Dorsolateral prefrontal cortex (tissue), 120 donors: ENCODE measurements at regions of chr15 and their contacts with region 1.

Region 1: GRCh38 chr15:74036271-74037170 is 42.0 kb downstream of the PML start:
- DNase-seq: peak in 7 of 10 donors; percentile 41 to 73 (median 65)
- H3K4me3 ChIP-seq: no peak overlapping the region
- H3K27ac ChIP-seq: peak overlapping the region in 1 of 59 donors; percentile 27
- H3K27me3 ChIP-seq: no peaks in the 10 kb centered on the region
- CTCF ChIP-seq: peak in 53 of 56 donors; percentile 31 to 68 (median 51)

Region 2: DNA sequence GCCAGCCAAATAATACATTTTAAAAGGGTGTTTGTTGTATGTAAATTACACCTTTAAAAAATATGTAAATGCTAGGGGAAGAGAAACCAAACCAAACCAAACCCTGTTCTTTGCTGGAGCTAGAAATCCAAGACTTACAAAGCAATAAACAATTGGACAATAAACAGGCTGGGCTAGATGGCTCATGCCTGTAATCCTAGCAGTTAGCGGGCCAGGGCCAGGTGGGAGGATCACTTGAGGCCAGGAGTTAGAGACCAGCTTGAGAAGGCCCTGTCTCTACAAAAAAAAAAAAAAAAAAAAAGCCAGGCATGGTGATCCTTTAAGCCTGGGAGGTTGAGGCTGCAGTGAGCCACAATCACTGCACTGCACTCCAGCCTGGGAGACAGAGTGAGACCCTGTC is 56.9 kb before region 1 on chr15:
- intact Hi-C with region 1: loop called (anchors 5 kb)
- DNase-seq: no peak
- H3K4me3 ChIP-seq: no peak overlapping the region
- H3K27ac ChIP-seq: no peak overlapping the region
- H3K27me3 ChIP-seq: peaks cover 0 to 12% (median 0%) of the 10 kb centered on the region in 45 donors
- CTCF ChIP-seq: no peak

Region 3: GRCh38 chr15:74108111-74108510 is 71.6 kb after region 1 on chr15:
- intact Hi-C with region 1: loop called in 1 of 2 experiments (anchors 5 kb)
- DNase-seq: no peak
- H3K4me3 ChIP-seq: no peak overlapping the region
- H3K27ac ChIP-seq: no peak overlapping the region
- H3K27me3 ChIP-seq: no peaks in the 10 kb centered on the region
- CTCF ChIP-seq: no peak